CD8-positive, alpha-beta T cell (primary cell): ENCODE measurements at regions of chr20 and their contacts with region 1.

Region 1: DNA sequence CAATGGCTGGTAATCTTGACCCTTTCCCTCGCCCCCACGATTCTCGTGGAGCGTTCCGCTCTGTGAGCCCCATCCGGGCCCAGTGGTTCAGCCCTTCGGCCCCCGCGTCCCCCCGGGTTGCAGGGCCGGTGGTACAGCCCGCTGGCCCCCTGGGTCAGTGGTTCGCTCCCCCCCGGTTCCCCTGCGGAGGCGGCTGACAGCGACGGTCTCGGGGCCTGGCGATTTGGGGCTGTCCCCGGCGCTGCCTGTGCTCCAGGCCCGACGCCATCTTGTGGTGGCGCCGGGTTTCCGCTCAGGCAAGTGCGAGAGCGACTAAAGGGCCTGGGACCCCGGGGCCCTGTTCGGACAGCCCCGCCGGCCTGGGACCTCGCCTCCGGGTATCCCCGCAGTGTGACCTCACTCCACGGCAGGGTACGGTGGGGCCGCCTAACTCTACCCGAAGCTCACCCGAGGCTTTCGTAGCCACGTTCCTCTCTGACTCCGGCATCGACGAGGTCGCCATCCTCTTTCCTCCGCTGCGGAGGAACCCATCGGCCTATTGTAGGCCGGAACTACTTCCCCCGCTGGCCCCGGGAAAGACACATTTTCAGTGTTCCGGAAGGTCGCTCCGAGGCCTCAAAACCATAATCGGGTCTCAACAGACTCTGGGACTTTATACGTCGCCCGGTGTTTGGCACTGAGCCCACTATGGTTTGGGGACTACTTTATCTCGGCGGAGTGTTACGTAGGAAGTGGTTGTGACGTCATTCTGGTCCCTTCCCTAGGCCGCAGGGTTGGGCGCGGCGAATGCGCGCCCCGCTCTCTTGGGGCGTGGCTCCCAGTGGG is at the start of gene ZNF335:
- DNase-seq: peak; percentile 90 to 98 (median 94)
- ATAC-seq: peak; percentile 83
- H3K4me3 ChIP-seq: peak within 1 kb of the TSS; percentile 100
- H3K4me3 Mint-ChIP-seq: peak within 1 kb of the TSS; percentile 90
- H3K27ac ChIP-seq: peak within 1 kb of the TSS; percentile 100
- H3K27ac Mint-ChIP-seq: peak within 1 kb of the TSS; percentile 100
- H3K4me1 ChIP-seq: peaks cover 27% of the 10 kb centered on the region
- H3K4me1 Mint-ChIP-seq: peaks cover 24% of the 10 kb centered on the region
- H3K27me3 ChIP-seq: no peaks in the 10 kb centered on the region
- H3K27me3 Mint-ChIP-seq: no peaks in the 10 kb centered on the region
- CTCF ChIP-seq: no peak
- total RNA-seq, gene ZNF335: 90.9 to 96.1 TPM

Region 2: DNA sequence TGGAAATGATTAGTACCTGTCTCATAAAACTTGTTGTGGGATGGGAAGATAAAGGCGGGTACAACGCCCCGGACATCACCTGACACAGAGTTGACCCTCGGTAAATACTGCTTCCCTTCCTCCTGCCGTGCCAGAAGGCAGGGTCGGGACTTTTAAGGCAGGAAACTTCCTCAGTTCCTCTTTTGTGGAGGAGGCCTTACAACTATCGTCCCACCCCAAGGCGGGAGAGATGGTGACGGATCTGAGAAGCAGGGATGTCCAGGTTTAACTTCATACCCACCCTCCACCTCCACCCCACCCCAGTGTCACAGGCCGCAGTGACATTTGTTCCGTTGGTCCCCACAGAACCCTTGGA is 179.6 kb before region 1 on chr20:
- CTCF ChIA-PET with region 1: no interaction called
- POLR2A ChIA-PET with region 1: interaction called, 3 read pairs
- intact Hi-C with region 1: loop called in 1 of 2 experiments (anchors 5 kb)
- DNase-seq: peak in 3 of 9 experiments; percentile 8 to 20 (median 12)
- ATAC-seq: peak; percentile 10
- H3K4me3 ChIP-seq: peak overlapping the region; percentile 82 to 100
- H3K4me3 Mint-ChIP-seq: peak overlapping the region; percentile 93
- H3K27ac ChIP-seq: peak overlapping the region; percentile 87 to 96
- H3K27ac Mint-ChIP-seq: peak overlapping the region; percentile 93
- H3K4me1 ChIP-seq: peaks cover 16% of the 10 kb centered on the region
- H3K4me1 Mint-ChIP-seq: peaks cover 19% of the 10 kb centered on the region
- H3K27me3 ChIP-seq: no peaks in the 10 kb centered on the region
- H3K27me3 Mint-ChIP-seq: no peaks in the 10 kb centered on the region
- CTCF ChIP-seq: no peak

Region 3: GRCh38 chr20:45880988-45881788 is 90.7 kb before region 1 on chr20 and contains the start of gene ZSWIM1:
- CTCF ChIA-PET with region 1: interaction called, 5 read pairs
- POLR2A ChIA-PET with region 1: interaction called, 19 read pairs
- intact Hi-C with region 1: loop called (anchors 1 kb)
- DNase-seq: peak; percentile 96 to 100 (median 99)
- ATAC-seq: peak; percentile 97
- H3K4me3 ChIP-seq: peak within 1 kb of the TSS; percentile 71 to 82
- H3K4me3 Mint-ChIP-seq: peak within 1 kb of the TSS; percentile 91
- H3K27ac ChIP-seq: peak within 1 kb of the TSS; percentile 75 to 87
- H3K27ac Mint-ChIP-seq: peak within 1 kb of the TSS; percentile 96
- H3K4me1 ChIP-seq: peaks cover 18% of the 10 kb centered on the region
- H3K4me1 Mint-ChIP-seq: peaks cover 40% of the 10 kb centered on the region
- H3K27me3 ChIP-seq: no peaks in the 10 kb centered on the region
- H3K27me3 Mint-ChIP-seq: no peaks in the 10 kb centered on the region
- CTCF ChIP-seq: no peak
- total RNA-seq, gene ZSWIM1: 8.5 to 9.2 TPM

Region 4: DNA sequence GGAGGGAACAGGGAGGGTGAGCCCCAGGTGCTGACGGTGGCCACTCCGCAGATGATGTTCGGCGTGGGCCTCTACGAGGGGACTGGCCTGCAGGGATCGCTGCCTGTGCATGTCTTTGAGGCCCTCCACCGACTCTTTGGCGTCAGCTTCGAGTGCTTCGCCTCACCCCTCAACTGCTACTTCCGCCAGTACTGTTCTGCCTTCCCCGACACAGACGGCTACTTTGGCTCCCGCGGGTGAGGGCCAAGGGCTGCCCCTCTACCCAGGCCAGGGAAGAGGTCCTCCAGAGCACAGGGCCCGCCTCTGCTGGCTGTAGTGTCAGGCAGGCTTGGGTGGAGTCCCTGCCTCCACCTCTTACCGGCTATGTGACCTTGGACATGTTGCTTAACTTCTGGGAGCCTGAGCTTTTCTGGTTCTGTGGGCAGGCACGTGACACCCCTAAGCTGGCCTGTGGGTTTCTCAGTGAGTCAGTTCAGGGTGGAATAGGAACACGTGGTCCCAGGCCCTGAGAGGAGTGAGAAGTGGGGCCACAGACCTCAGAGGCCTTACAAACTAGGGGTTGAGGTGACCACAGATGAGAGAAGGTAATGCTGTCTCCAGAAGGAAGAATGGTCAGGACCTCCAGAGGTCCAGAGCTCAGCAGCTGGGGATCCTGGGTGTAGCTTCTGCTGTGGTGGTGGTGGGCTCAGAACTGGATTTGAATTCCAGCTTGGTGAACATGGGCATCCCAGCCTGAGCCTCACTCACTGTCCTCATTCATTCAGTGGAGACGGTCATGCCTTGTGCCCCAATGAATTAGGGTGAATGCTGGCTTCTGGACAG is 25.5 kb before region 1 on chr20:
- CTCF ChIA-PET with region 1: interaction called, 18 read pairs
- POLR2A ChIA-PET with region 1: interaction called, 7 read pairs
- intact Hi-C with region 1: no loop called
- DNase-seq: peak in 7 of 9 experiments; percentile 37 to 84 (median 64)
- ATAC-seq: peak; percentile 47
- H3K4me3 ChIP-seq: no peak overlapping the region
- H3K4me3 Mint-ChIP-seq: no peak overlapping the region
- H3K27ac ChIP-seq: peak overlapping the region in 1 of 2 experiments; percentile 75
- H3K27ac Mint-ChIP-seq: peak overlapping the region; percentile 78
- H3K4me1 ChIP-seq: peaks cover 8% of the 10 kb centered on the region
- H3K4me1 Mint-ChIP-seq: peaks cover 5% of the 10 kb centered on the region
- H3K27me3 ChIP-seq: no peaks in the 10 kb centered on the region
- H3K27me3 Mint-ChIP-seq: no peaks in the 10 kb centered on the region
- CTCF ChIP-seq: no peak

Region 5: DNA sequence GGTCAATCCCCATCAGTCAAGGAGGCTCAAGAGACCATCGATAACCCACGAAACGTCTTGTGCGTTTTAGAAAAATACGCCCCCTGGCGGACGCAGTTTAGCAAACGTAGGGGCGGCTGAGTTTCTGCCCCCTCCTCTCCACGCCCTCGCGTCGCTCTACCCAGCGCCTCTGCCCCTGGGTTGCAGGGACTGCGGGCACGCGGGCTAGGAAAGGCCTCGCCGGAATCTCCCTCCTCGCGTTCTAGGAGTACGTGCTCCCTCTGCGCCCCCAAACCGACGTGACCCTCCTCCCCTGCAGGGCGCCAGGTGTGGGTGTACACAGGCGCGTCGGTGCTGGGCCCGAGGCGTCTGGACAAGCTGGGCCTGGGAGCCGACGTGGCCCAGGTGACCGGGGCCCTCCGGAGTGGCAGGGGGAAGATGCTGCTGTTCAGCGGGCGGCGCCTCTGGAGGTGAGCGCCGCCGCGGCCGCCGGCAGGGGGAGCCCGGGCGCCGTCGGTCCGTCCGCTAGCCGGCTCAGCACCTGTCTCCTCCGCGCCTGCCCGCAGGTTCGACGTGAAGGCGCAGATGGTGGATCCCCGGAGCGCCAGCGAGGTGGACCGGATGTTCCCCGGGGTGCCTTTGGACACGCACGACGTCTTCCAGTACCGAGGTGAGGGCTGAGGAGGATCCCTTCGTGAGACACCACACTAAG is 42.1 kb after region 1 on chr20:
- CTCF ChIA-PET with region 1: interaction called, 29 read pairs
- POLR2A ChIA-PET with region 1: interaction called, 5 read pairs
- intact Hi-C with region 1: loop called (anchors 1 to 5 kb)
- DNase-seq: peak; percentile 44 to 85 (median 73)
- ATAC-seq: peak; percentile 60
- H3K4me3 ChIP-seq: peak overlapping the region; percentile 22 to 34
- H3K4me3 Mint-ChIP-seq: peak overlapping the region; percentile 15
- H3K27ac ChIP-seq: no peak overlapping the region
- H3K27ac Mint-ChIP-seq: no peak overlapping the region
- H3K4me1 ChIP-seq: peaks cover 40% of the 10 kb centered on the region
- H3K4me1 Mint-ChIP-seq: peaks cover 46% of the 10 kb centered on the region
- H3K27me3 ChIP-seq: peaks cover 34 to 44% of the 10 kb centered on the region in 2 experiments
- H3K27me3 Mint-ChIP-seq: peaks cover 76% of the 10 kb centered on the region
- CTCF ChIP-seq: peak; percentile 94

Region 6: GRCh38 chr20:46151936-46152335 is 180.0 kb after region 1 on chr20:
- CTCF ChIA-PET with region 1: no interaction called
- POLR2A ChIA-PET with region 1: no interaction called
- intact Hi-C with region 1: no loop called
- DNase-seq: peak in 1 of 9 experiments; percentile 16
- ATAC-seq: no peak
- H3K4me3 ChIP-seq: no peak overlapping the region
- H3K4me3 Mint-ChIP-seq: no peak overlapping the region
- H3K27ac ChIP-seq: no peak overlapping the region
- H3K27ac Mint-ChIP-seq: no peak overlapping the region
- H3K4me1 ChIP-seq: no peaks in the 10 kb centered on the region
- H3K4me1 Mint-ChIP-seq: no peaks in the 10 kb centered on the region
- H3K27me3 ChIP-seq: no peaks in the 10 kb centered on the region
- H3K27me3 Mint-ChIP-seq: peaks cover 10% of the 10 kb centered on the region
- CTCF ChIP-seq: no peak

Region 7: DNA sequence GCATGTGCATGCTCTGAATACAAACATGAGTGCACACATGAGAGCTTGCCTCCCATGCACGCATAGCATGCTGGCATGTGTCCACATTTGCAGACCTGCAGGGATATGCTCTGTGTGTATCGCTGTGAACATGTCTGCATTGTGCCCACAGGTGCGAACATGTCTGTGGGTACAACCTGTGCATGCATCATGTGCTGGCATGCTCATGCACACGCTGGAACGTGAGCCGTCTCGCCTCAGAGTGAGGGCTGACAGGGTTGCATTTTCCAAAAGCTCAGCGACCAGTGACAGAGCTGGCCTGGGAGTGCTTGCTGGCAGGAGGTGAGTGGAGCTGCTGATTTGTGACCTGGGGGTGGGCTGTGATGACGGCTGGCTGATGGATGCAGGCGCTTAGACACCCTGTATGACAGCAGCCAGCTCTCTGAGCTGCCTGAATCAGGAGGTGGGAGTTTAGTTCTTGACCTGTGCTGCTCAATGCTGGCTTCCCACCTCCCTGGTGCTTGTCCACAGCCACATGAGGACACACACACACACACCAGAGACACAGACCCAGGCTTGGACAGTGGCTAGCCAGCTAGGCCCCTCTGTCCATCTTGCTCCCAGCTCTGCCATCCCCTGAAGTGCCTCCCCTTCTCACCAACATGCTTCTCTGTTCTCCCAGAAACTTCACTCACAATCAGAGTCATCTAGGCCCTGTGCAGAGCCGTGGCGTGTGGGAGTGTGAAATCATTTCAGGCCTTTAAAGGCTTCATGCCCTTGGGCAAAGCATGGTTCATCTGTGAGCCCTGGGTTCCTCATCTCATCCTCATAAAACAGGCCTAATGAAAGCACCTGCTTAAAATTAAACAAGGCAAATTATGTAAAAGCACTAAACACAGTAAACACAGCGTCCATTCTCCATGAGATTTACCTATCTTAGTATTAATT is 197.6 kb after region 1 on chr20:
- CTCF ChIA-PET with region 1: no interaction called
- POLR2A ChIA-PET with region 1: no interaction called
- intact Hi-C with region 1: no loop called
- DNase-seq: no peak
- ATAC-seq: no peak
- H3K4me3 ChIP-seq: no peak overlapping the region
- H3K4me3 Mint-ChIP-seq: no peak overlapping the region
- H3K27ac ChIP-seq: no peak overlapping the region
- H3K27ac Mint-ChIP-seq: no peak overlapping the region
- H3K4me1 ChIP-seq: no peaks in the 10 kb centered on the region
- H3K4me1 Mint-ChIP-seq: no peaks in the 10 kb centered on the region
- H3K27me3 ChIP-seq: peaks cover 8 to 12% of the 10 kb centered on the region in 2 experiments
- H3K27me3 Mint-ChIP-seq: peaks cover 54% of the 10 kb centered on the region
- CTCF ChIP-seq: no peak

Region 8: DNA sequence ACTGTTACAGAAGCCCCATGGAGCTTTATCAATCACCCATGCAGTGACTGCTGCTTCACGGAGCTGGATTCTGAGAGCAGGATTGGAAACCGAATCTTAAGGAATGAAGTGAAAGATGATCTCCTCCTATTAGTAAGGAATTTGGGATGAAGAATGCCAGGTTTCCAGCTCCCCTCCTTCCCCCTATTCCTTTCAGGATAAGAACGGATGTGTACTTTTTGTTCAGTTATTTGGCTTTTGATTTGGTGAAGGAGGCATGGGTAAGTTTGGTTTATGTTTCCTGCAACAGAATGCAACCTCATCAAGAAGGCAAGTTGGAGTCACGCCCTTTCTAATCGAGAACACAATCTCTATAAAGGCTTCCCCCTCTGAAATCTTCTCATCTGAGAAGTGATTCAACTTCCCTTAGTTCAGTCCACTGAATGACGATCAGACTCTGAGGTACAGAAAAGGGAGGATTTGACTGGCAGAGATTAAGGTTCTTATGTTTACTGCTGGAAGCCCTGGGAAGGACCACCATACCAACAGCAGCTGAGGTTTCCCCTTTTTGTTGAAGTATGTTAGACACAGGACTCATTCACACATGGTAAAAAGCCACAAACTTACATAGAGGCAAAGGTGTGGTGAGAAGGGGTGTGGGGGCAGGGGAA is 429.1 kb after region 1 on chr20:
- CTCF ChIA-PET with region 1: no interaction called
- POLR2A ChIA-PET with region 1: no interaction called
- intact Hi-C with region 1: loop called (anchors 1 to 2 kb)
- DNase-seq: peak in 7 of 9 experiments; percentile 7 to 89 (median 51)
- ATAC-seq: peak; percentile 84
- H3K4me3 ChIP-seq: peak overlapping the region; percentile 2 to 27
- H3K4me3 Mint-ChIP-seq: peak overlapping the region; percentile 70
- H3K27ac ChIP-seq: peak overlapping the region; percentile 53 to 87
- H3K27ac Mint-ChIP-seq: peak overlapping the region; percentile 92
- H3K4me1 ChIP-seq: peaks cover 67% of the 10 kb centered on the region
- H3K4me1 Mint-ChIP-seq: peaks cover 75% of the 10 kb centered on the region
- H3K27me3 ChIP-seq: no peaks in the 10 kb centered on the region
- H3K27me3 Mint-ChIP-seq: no peaks in the 10 kb centered on the region
- CTCF ChIP-seq: no peak

Region 9: DNA sequence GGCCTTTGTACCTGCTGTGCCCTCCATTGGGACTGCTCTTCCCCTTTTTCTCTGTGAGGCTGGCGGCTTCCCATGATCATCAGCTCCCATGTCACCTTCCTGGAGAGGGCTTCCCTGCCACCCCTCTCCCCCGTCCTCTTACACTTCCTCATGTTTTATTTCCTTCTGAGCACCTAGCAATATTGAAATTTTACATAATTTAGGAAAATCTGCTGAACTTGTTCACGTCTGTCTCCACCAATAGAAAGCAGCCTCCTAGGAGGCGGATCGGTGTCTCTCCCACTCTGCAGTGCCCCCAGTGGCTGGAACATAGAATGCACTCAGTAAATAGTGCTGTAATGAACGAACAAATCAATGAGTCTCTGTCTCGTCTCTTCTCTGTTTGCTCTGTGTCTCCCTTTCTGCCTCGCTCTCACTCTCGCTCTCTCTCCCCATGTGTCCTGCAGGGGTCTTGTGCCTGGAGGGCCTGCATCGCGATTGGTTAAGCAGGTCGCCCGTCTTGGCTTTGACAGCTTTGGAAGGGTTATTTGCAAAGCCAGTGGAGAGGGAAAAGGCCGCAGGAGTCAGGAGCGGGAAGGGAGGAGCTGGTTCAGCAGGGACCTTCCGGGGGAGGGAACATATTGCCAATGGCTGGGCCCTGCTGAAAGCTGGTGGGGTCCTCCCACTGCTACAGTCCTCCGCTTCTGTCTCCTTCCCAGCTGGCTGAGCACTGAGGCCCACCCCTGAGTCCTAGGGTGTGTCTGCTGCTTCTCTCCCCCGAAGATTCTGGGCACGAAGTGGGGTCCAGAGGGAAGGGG is 590.7 kb after region 1 on chr20:
- CTCF ChIA-PET with region 1: no interaction called
- POLR2A ChIA-PET with region 1: no interaction called
- intact Hi-C with region 1: no loop called
- DNase-seq: peak; percentile 27 to 66 (median 51)
- ATAC-seq: peak; percentile 83
- H3K4me3 ChIP-seq: peak overlapping the region in 1 of 2 experiments; percentile 11
- H3K4me3 Mint-ChIP-seq: no peak overlapping the region
- H3K27ac ChIP-seq: no peak overlapping the region
- H3K27ac Mint-ChIP-seq: no peak overlapping the region
- H3K4me1 ChIP-seq: peaks cover 2% of the 10 kb centered on the region
- H3K4me1 Mint-ChIP-seq: peaks cover 1% of the 10 kb centered on the region
- H3K27me3 ChIP-seq: no peaks in the 10 kb centered on the region
- H3K27me3 Mint-ChIP-seq: peaks cover 10% of the 10 kb centered on the region
- CTCF ChIP-seq: peak; percentile 86